AG04450 (cell line): ENCODE measurements at regions of chr9 and their contacts with region 1.

Region 1: DNA sequence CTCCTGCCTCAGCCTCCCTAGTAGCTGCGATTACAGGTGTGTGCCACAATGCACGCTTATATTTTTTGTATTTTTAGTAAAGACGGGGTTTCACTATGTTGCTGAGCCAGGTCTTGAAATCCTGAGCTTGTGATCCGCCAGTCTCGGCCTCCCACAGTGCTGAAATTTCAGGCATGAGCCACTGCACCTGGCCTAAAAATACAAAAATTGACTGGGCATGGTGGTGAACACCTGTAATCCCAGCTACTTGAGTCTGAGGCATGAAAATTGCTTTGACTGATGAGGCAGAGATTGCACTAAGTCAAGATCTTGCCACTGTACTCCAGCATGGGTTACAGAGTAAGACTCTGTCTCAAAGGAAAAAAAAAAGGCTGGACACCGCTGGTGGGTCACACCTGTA is 13.1 kb upstream of the DYNC2I2 start:
- DNase-seq: no peak
- H3K4me3 ChIP-seq: no peak overlapping the region
- H3K27ac ChIP-seq: no peak overlapping the region
- H3K27me3 ChIP-seq: no peaks in the 10 kb centered on the region
- CTCF ChIP-seq: no peak

Region 2: GRCh38 chr9:128455849-128456612 is 213.8 kb before region 1 on chr9 and contains the start of gene ODF2:
- CTCF ChIA-PET with region 1: no interaction called
- POLR2A ChIA-PET with region 1: no interaction called
- DNase-seq: peak; percentile 84
- H3K4me3 ChIP-seq: peak within 1 kb of the TSS; percentile 82
- H3K27ac ChIP-seq: peak within 1 kb of the TSS; percentile 73
- H3K27me3 ChIP-seq: no peaks in the 10 kb centered on the region
- CTCF ChIP-seq: no peak
- polyA plus RNA-seq, gene ODF2: 16.8 and 19.4 TPM in 2 replicates

Region 3: DNA sequence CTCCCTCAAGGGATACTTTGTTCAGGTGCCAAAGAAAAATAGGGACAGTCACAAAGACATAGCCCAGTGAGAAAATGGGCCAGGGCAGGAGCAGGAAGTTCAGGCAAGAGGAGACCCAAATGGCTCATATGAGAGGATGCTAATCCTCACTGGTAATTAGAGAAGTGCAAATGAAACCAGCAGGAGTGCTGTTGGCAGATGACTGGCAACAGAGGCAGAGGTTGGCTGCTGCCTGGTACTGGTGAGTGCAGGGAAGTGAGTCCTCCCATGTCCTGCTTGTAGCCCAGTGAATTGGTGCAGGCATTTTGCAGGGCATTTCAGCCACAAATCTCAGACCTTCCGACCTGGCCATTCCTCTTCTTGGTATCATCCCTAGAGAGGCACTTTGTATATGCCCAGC is 190.5 kb before region 1 on chr9:
- CTCF ChIA-PET with region 1: no interaction called
- POLR2A ChIA-PET with region 1: interaction called, 10 read pairs
- DNase-seq: no peak
- H3K4me3 ChIP-seq: no peak overlapping the region
- H3K27ac ChIP-seq: no peak overlapping the region
- H3K27me3 ChIP-seq: no peaks in the 10 kb centered on the region
- CTCF ChIP-seq: no peak

Region 4: DNA sequence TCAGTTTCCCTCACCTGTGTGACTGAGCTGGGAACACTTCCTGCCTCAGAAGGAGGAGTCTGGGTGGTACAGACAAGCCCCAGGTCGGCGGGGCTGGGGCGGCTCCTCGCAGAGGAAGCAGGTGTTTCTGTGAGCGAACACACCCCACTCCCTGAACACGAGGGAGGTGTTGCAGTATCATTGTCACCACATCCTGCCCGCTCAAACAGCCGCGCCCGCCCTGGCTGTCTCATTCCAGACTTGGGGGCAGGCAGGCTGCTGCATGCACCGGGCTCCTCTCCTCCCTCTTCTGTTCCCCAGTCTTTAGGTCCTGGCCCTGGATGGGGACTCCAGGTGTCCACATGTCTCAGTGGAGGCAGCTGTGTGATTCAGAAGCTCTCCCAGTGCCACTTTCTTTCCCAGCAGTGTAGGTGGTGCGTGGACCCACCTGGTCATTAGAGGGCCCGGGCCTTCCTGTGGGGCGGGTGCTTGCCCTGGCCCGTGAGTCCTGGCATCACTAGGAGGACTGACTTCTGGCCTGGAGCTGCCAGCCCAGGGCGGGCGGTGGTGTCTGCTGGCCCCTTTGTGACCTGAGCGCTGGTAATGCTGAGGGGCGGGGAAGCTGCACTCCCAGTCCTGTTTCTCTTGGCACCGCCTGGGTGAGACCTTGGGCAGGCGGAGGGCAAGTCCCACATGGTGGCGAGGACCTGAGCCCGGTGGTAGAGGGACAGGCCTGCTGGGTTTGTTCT is 232.7 kb after region 1 on chr9:
- CTCF ChIA-PET with region 1: no interaction called
- POLR2A ChIA-PET with region 1: no interaction called
- DNase-seq: no peak
- H3K4me3 ChIP-seq: no peak overlapping the region
- H3K27ac ChIP-seq: peak overlapping the region; percentile 21
- H3K27me3 ChIP-seq: no peaks in the 10 kb centered on the region
- CTCF ChIP-seq: no peak